ENCODE measurements at regions of chr9 and their contacts with region 1.

Region 1: GRCh38 chr9:69809304-69809863 is 11.2 kb upstream of the CFAP95 start:
- DNase-seq: no peak
- ATAC-seq: no peak
- H3K4me3 ChIP-seq: no peak overlapping the region
- H3K27ac ChIP-seq: no peak overlapping the region
- H3K4me1 ChIP-seq: no peaks in the 10 kb centered on the region
- H3K27me3 ChIP-seq: peaks cover 0 to 4% (median 0%) of the 10 kb centered on the region in 3 donors
- CTCF ChIP-seq: no peak

Region 2: GRCh38 chr9:69857131-69857530 is 47.7 kb after region 1 on chr9:
- intact Hi-C with region 1: loop called in 1 of 2 experiments (anchors 10 kb)
- DNase-seq: no peak
- ATAC-seq: no peak
- H3K4me3 ChIP-seq: no peak overlapping the region
- H3K27ac ChIP-seq: no peak overlapping the region
- H3K4me1 ChIP-seq: no peaks in the 10 kb centered on the region
- H3K27me3 ChIP-seq: no peaks in the 10 kb centered on the region
- CTCF ChIP-seq: no peak

Region 3: GRCh38 chr9:69888856-69889585 is 79.6 kb after region 1 on chr9:
- intact Hi-C with region 1: no loop called
- DNase-seq: no peak
- ATAC-seq: no peak
- H3K4me3 ChIP-seq: no peak overlapping the region
- H3K27ac ChIP-seq: no peak overlapping the region
- H3K4me1 ChIP-seq: peaks cover 14% of the 10 kb centered on the region
- H3K27me3 ChIP-seq: no peaks in the 10 kb centered on the region
- CTCF ChIP-seq: no peak

Region 4: DNA sequence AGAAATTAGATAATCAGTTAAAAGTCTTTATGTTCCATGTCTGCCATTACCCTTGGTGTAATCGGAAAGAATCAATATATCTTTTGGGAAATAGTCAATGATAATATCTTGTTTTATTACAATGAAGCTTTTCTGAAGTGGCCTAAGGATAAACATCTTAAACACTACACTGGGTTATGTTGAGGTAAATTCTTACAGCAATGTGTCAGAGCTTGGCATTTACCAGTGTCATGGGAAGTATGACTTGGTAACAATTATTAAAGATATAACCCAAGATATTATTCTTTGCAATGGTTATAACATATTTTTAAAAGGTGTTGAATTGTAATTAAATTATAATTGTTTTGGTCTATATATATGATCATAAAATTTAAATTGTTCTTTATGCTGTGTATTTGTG is 95.9 kb after region 1 on chr9:
- intact Hi-C with region 1: no loop called
- DNase-seq: no peak
- ATAC-seq: no peak
- H3K4me3 ChIP-seq: no peak overlapping the region
- H3K27ac ChIP-seq: no peak overlapping the region
- H3K4me1 ChIP-seq: no peaks in the 10 kb centered on the region
- H3K27me3 ChIP-seq: no peaks in the 10 kb centered on the region
- CTCF ChIP-seq: no peak

Measured in psoas muscle (tissue), 8 donors.